ENCODE measurements at regions of chr2 and their contacts with region 1.

Region 1: DNA sequence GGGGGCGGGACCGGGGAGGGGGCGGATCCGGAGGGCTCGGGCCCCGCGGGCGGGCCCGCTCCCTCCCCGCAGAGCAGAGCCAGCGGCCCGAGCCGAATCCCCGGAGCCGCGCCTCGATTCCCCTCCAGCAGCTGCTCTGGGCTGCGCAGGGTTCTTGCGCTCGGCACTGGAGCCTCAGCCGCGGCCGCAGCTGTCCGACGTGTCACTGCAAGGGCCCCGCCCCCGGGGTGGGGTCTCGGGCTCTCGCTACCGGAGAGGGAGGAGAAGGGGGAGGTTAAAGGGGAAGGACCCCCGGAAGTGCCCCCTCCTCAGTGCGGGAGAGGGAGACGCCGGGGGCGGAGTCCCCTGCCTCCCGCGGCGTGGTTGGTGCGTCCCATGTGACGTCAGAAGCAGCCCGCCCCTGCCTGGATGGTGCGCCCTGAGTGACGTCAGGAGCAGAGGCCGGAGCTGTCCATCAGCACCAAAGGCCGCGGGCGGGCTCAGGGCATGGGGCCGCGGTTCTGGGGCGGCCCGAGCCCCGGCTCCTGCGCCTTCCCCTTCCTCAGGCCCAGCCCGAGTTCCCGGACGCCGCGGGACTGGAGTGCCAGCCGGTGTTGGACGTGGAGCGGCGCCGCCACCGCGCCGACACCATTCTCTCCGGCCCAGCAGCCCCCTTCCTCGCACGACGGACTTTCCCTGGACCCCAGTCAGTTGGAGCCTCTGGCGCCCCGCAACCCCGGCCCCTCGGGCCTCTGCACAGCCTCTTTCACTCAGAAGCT is at the starts of genes CHPF and TMEM198:
- DNase-seq: peak; percentile 100
- H3K4me3 ChIP-seq: peak within 1 kb of the TSS; percentile 80 to 86
- H3K27ac ChIP-seq: peak within 1 kb of the TSS; percentile 85 to 94
- H3K4me1 ChIP-seq: peaks cover 23% of the 10 kb centered on the region
- H3K27me3 ChIP-seq: no peaks in the 10 kb centered on the region
- CTCF ChIP-seq: no peak
- POLR2A ChIP-seq: peak; percentile 39
- total RNA-seq, gene CHPF: 796 to 992 TPM
- total RNA-seq, gene TMEM198: 11.3 to 11.8 TPM

Region 2: GRCh38 chr2:219642465-219643080 is 98.8 kb after region 1 on chr2:
- intact Hi-C with region 1: loop called (anchors 5 kb)
- DNase-seq: peak; percentile 99
- H3K4me3 ChIP-seq: no peak overlapping the region
- H3K27ac ChIP-seq: peak overlapping the region in 1 of 2 donors; percentile 76
- H3K4me1 ChIP-seq: peaks cover 53% of the 10 kb centered on the region
- H3K27me3 ChIP-seq: no peaks in the 10 kb centered on the region
- CTCF ChIP-seq: peak; percentile 95 to 100 (median 100)
- POLR2A ChIP-seq: no peak

Region 3: DNA sequence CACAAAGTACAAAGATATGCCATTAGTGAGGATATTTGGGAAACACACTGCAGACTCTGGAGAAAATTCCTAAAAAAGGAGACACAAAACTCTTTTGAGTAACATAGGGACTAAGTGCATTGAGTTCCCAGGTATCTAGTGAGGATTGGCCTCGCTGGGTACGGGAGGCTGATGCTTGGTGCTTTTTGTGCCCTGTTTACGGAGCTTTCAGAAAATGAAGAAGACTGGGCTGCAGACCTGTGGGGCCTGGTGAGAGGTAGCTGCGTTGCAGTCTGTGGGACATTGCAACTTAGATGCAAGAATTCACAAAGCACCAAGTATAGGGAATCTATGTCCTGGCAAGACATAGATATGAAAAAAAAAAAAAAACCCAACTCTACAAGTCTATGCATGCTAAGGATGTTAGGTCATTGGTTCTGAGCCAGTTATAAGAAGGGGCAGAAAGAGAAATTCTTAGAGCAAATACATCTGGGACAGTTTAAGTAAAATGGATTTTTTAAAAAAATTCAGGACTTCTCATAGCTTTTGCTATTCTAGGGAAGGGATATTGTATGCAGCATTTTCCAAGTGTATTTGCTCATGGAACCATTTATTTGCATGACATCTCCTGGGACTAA is 239.7 kb after region 1 on chr2:
- intact Hi-C with region 1: no loop called
- DNase-seq: no peak
- H3K4me3 ChIP-seq: no peak overlapping the region
- H3K27ac ChIP-seq: no peak overlapping the region
- H3K4me1 ChIP-seq: peaks cover 6% of the 10 kb centered on the region
- H3K27me3 ChIP-seq: no peaks in the 10 kb centered on the region
- CTCF ChIP-seq: no peak
- POLR2A ChIP-seq: no peak

Region 4: GRCh38 chr2:219823574-219823973 is 279.8 kb after region 1 on chr2:
- intact Hi-C with region 1: no loop called
- DNase-seq: no peak
- H3K4me3 ChIP-seq: no peak overlapping the region
- H3K27ac ChIP-seq: no peak overlapping the region
- H3K4me1 ChIP-seq: no peaks in the 10 kb centered on the region
- H3K27me3 ChIP-seq: no peaks in the 10 kb centered on the region
- CTCF ChIP-seq: no peak
- POLR2A ChIP-seq: no peak

Measured in testis (tissue), 5 donors.